ENCODE measurements at regions of chr1 and their contacts with region 1.

Region 1: DNA sequence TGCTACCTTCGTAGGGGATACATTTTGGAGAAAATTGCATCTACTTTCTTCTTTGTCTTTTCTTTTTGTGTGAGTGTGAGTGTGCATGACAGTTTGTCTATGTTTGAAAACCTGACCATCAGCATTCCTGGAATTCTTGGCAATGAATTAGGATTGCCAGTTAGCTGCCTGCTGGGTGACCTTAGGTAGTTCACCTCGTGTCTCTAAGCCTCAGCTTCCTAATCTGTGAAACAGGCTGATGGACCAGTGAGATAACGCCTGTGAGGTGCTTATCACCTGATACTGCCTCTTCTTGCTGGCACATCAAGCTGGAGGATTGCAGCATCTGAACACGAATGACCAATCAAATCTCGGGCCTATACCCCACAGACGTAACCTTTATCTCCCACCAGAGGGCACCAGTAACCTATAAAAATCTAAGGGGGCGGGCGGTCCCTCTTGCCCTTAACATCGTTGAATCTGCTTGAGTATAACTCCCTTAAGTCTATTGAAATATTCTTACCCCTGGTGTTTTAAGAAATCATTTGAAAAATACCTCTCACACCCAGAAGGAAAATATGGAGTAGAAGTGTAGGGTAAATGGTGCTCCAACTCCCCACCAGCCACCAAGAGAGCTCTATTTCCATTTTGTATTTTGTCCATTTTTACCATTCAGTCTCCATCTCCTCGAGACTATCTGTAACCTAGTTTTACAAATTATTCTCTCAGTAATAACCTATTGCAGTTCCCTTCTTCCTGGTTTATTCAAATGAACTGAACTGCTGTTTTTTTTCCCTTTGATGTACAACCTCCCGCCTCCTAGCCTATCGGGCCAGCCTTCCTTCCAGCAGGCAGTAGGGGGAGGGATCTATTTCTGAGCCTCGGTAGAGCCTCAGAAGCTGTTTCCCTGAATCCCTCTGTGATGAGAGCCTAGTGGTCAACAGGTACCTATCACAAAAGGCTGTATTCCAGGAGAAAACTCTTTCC is 49.7 kb downstream of the MDM4 start:
- DNase-seq: peak; percentile 76
- H3K4me3 Mint-ChIP-seq: no peak overlapping the region
- H3K27ac Mint-ChIP-seq: no peak overlapping the region
- H3K4me1 Mint-ChIP-seq: peaks cover 45% of the 10 kb centered on the region
- H3K27me3 Mint-ChIP-seq: no peaks in the 10 kb centered on the region

Region 2: GRCh38 chr1:204516180-204516879 is 49.6 kb before region 1 on chr1 and contains the start of gene MDM4:
- CTCF ChIA-PET with region 1: interaction called, 5 read pairs
- intact Hi-C with region 1: loop called (anchors 1 kb)
- DNase-seq: peak; percentile 97
- H3K4me3 Mint-ChIP-seq: no peak within 1 kb of the TSS
- H3K27ac Mint-ChIP-seq: peak within 1 kb of the TSS; percentile 72
- H3K4me1 Mint-ChIP-seq: peaks cover 59% of the 10 kb centered on the region
- H3K27me3 Mint-ChIP-seq: no peaks in the 10 kb centered on the region
- total RNA-seq, gene MDM4: 109 TPM

Region 3: GRCh38 chr1:204578867-204579664 is 13.2 kb after region 1 on chr1:
- CTCF ChIA-PET with region 1: interaction called, 21 read pairs
- intact Hi-C with region 1: no loop called
- DNase-seq: peak; percentile 71
- H3K4me3 Mint-ChIP-seq: peak overlapping the region; percentile 70
- H3K27ac Mint-ChIP-seq: peak overlapping the region; percentile 87
- H3K4me1 Mint-ChIP-seq: peaks cover 26% of the 10 kb centered on the region
- H3K27me3 Mint-ChIP-seq: no peaks in the 10 kb centered on the region

Region 4: GRCh38 chr1:204692325-204692840 is 126.5 kb after region 1 on chr1:
- CTCF ChIA-PET with region 1: no interaction called
- intact Hi-C with region 1: loop called (anchors 5 kb)
- DNase-seq: no peak
- H3K4me3 Mint-ChIP-seq: no peak overlapping the region
- H3K27ac Mint-ChIP-seq: no peak overlapping the region
- H3K4me1 Mint-ChIP-seq: peaks cover 9% of the 10 kb centered on the region
- H3K27me3 Mint-ChIP-seq: peaks cover 2% of the 10 kb centered on the region

Measured in activated naive CD4-positive, alpha-beta T cell treated with anti-CD3 and anti-CD28 coated beads for 36 hours (primary cell).